ENCODE measurements at regions of chr11 and their contacts with region 1.

Region 1: DNA sequence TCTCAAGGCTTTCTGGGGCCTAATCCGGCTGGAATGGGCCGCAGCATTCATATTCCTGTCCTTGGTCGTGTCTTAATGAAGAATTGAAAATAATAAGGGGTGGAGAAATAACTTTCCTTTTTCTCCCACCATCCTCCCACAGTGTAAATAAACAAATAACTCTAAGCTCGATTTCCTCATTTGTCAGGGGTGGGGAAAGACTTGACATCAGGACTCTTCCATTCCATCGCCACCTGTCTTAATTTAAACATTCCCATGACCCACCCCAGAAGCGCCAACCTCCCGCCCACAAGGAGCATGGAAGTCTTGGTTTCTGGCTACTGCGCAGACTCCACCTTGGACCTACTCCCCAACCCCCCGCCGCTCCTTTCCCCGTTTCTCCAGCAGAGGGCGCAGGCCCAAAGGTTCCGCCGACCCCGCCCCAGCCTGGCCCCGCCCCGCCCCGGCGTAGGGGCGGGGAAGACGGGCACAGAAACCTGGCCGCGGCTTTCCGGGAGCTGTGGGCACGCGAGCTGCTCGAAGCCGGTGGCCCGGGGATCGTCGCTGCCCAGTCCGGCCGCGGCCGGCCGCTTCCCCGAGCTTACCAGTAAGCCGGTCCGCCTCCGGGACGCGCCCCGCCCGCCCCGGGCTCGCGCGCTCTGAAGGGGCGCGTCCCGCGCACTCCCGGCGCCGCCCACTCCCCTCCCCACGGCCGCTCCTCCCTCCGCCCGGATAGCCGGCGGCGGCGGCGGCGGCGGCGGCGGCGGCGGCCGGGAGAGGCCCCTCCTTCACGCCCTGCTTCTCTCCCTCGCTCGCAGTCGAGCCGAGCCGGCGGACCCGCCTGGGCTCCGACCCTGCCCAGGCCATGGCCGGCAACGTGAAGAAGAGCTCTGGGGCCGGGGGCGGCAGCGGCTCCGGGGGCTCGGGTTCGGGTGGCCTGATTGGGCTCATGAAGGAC is at the start of gene CBL:
- DNase-seq: peak; percentile 85
- H3K4me3 ChIP-seq: peak within 1 kb of the TSS; percentile 76 to 97 (median 96)
- H3K27ac ChIP-seq: peak within 1 kb of the TSS; percentile 60
- H3K4me1 ChIP-seq: peaks cover 11% of the 10 kb centered on the region
- H3K27me3 ChIP-seq: no peaks in the 10 kb centered on the region
- CTCF ChIP-seq: peak; percentile 57 to 91
- total RNA-seq, gene CBL: 19.5 to 33.7 TPM

Region 2: GRCh38 chr11:119284344-119285157 is 78.7 kb after region 1 on chr11:
- CTCF ChIA-PET with region 1: interaction called, 5 read pairs
- dilution Hi-C with region 1: no loop called
- in situ Hi-C with region 1: no loop called
- intact Hi-C with region 1: loop called (anchors 1 kb)
- DNase-seq: peak; percentile 35
- H3K4me3 ChIP-seq: no peak overlapping the region
- H3K27ac ChIP-seq: no peak overlapping the region
- H3K4me1 ChIP-seq: no peaks in the 10 kb centered on the region
- H3K27me3 ChIP-seq: no peaks in the 10 kb centered on the region
- CTCF ChIP-seq: peak in 1 of 2 donors; percentile 59

Region 3: DNA sequence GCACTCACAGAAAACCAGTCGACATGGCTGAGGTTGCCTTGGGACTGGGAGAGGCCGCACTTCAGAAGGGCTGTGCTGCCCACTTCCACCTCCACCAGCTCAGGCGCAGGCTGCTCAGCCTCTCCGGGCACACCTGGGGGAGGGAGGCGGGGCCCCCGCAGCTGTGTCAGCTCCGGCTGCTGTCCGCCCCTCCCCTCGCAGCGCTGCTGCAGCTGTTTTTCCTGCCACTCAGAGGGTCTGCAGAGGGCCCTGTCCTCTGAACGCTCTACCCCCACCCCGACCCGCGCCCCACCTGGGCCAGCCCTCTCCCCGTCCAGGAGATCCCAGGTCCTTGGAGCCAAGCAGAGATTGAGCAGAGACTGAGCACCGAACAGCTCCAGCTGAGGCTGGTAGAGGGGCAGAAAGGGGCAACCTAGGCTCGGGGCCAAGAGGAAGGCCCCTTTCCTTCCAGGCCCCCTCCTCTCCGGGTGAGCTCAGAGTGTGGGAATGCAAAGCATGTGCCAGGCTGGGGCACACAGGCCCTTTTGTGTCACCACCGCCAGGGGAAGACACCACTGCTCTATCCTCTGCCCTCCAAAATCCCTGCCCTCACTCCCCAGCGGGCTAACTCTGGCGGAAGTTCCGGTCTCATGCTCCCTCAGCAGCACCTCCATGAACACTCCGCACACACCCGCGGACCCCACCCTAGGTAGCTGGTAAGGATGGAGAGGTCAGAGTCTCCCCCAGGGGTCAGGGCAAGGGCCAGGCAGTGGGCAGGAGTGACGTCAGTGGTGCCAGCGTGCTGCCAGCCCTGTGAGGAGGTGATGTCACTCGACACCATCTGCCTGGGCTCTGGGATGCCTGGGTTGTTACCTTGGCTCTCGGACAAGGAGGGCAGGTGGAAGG is 109.5 kb after region 1 on chr11:
- CTCF ChIA-PET with region 1: interaction called, 10 read pairs
- dilution Hi-C with region 1: no loop called
- in situ Hi-C with region 1: no loop called
- intact Hi-C with region 1: no loop called
- DNase-seq: peak; percentile 56
- H3K4me3 ChIP-seq: peak overlapping the region; percentile 37 to 52 (median 48)
- H3K27ac ChIP-seq: no peak overlapping the region
- H3K4me1 ChIP-seq: peaks cover 67% of the 10 kb centered on the region
- H3K27me3 ChIP-seq: no peaks in the 10 kb centered on the region
- CTCF ChIP-seq: no peak

Region 4: GRCh38 chr11:119323538-119324033 is 117.7 kb after region 1 on chr11:
- CTCF ChIA-PET with region 1: interaction called, 3 read pairs
- dilution Hi-C with region 1: no loop called
- in situ Hi-C with region 1: no loop called
- intact Hi-C with region 1: loop called (anchors 1 kb)
- DNase-seq: peak; percentile 52
- H3K4me3 ChIP-seq: no peak overlapping the region
- H3K27ac ChIP-seq: no peak overlapping the region
- H3K4me1 ChIP-seq: peaks cover 29% of the 10 kb centered on the region
- H3K27me3 ChIP-seq: no peaks in the 10 kb centered on the region
- CTCF ChIP-seq: peak; percentile 78 to 85

Measured in mammary epithelial cell (primary cell).